HCT116 (cell line): ENCODE measurements at regions of chr17 and their contacts with region 1.

Region 1: GRCh38 chr17:1055751-1056645 is 59.1 kb downstream of the TIMM22 start:
- DNase-seq: no peak
- ATAC-seq: peak; percentile 68
- H3K4me3 ChIP-seq: no peak overlapping the region
- H3K27ac ChIP-seq: no peak overlapping the region
- H3K4me1 ChIP-seq: peaks cover 7 to 14% of the 10 kb centered on the region in 2 experiments
- H3K27me3 ChIP-seq: no peaks in the 10 kb centered on the region
- CTCF ChIP-seq: peak; percentile 34 to 73 (median 57); a peak in 5 of 6 replicates
- POLR2A ChIP-seq: no peak
- RAD21 ChIP-seq: peak; percentile 70

Region 2: GRCh38 chr17:951325-952132 is 104.5 kb before region 1 on chr17:
- CTCF ChIA-PET with region 1: no interaction called
- POLR2A ChIA-PET with region 1: no interaction called
- RAD21 ChIA-PET with region 1: no interaction called
- intact Hi-C with region 1: no loop called
- DNase-seq: no peak
- ATAC-seq: peak; percentile 66
- H3K4me3 ChIP-seq: no peak overlapping the region
- H3K27ac ChIP-seq: no peak overlapping the region
- H3K4me1 ChIP-seq: peaks cover 25 to 40% of the 10 kb centered on the region in 2 experiments
- H3K27me3 ChIP-seq: no peaks in the 10 kb centered on the region
- CTCF ChIP-seq: no peak
- POLR2A ChIP-seq: no peak
- RAD21 ChIP-seq: no peak

Region 3: DNA sequence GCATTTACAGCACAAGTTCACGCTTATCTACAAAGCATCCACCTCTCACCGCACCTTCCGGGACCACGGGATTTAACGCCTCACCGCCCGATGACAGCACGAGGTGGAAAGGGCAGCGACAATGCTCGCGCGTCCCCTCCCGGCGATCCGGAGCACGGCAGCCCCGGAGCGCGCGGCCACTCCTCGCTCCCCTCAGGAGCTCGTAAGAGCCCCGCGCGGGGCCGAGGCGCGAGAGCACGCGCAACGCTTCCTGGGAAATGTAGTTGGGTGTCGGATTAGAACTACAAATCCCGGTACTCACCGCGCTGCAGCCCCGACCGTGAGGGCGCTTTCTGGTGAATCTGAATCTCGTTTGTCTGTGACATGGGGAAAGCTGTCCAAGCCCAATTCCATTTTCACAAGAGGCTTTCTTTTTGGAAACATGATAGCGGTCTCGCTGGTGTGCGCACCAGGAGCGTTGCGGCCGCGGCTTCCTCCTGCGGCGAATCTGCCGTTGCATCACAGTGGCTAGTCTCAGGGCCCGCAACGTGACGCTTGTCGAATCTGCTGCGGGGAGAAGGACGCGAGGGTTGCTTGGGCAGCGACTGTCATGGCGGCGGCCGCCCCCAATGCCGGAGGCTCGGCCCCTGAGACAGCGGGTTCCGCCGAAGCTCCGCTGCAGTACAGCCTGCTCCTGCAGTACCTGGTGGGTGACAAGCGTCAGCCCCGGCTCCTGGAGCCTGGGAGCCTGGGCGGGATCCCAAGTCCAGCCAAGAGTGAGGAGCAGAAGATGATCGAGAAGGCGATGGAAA is 59.2 kb before region 1 on chr17 and contains the start of gene TIMM22:
- CTCF ChIA-PET with region 1: interaction called, 14 read pairs
- POLR2A ChIA-PET with region 1: no interaction called
- RAD21 ChIA-PET with region 1: no interaction called
- intact Hi-C with region 1: no loop called
- DNase-seq: peak; percentile 96
- ATAC-seq: peak; percentile 95
- H3K4me3 ChIP-seq: peak within 1 kb of the TSS; percentile 99 to 100
- H3K27ac ChIP-seq: peak within 1 kb of the TSS; percentile 58
- H3K4me1 ChIP-seq: peaks cover 8 to 19% of the 10 kb centered on the region in 2 experiments; a peak in 3 of 4 replicates
- H3K27me3 ChIP-seq: no peaks in the 10 kb centered on the region
- CTCF ChIP-seq: peak; percentile 88 to 93 (median 91); a peak in 5 of 6 replicates
- POLR2A ChIP-seq: peak; percentile 80
- RAD21 ChIP-seq: peak; percentile 98
- total RNA-seq, gene TIMM22: 14.0 TPM

Region 4: DNA sequence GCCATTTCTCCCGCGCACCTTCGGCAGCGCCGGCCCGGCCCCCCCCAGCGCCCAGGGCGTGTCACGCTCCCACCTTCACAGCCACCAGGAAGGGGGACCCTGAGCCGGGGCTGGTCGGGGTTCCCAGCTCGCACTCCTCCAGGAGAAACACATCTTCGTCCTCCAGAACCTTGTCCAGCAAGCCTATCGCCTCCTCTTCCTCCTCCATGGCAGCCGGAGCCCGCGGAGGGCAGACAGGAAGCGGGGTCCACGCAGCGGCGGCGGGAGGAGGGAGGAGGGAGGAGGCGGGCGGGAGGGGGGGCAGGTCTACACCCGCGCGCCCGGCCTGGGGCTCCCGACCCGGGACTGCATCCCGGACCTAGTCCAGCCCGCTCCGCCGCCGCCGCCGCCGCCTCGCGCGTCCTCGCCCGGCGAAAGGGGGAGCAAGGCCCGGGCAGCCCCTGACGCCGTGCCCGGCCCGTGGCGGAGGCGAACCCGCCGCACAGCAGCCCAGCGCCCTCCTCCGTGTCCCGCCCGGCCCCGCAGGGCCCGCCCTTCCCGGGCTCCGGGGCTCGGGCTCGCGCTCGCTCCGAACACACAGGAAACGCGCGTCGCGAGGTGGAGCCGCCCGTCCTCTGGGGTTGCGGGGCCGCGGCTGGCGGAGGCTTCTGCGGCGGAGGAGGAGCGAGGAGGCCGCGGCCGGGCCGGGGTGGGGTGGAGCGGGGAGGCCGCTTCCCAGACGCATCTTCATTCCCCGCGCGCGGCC is 53.0 kb after region 1 on chr17:
- CTCF ChIA-PET with region 1: interaction called, 25 read pairs
- POLR2A ChIA-PET with region 1: no interaction called
- RAD21 ChIA-PET with region 1: interaction called, 3 to 4 read pairs
- intact Hi-C with region 1: no loop called
- DNase-seq: no peak
- ATAC-seq: peak; percentile 39
- H3K4me3 ChIP-seq: peak overlapping the region; percentile 67 to 79
- H3K27ac ChIP-seq: peak overlapping the region; percentile 96
- H3K4me1 ChIP-seq: peaks cover 50 to 59% of the 10 kb centered on the region in 2 experiments
- H3K27me3 ChIP-seq: no peaks in the 10 kb centered on the region
- CTCF ChIP-seq: no peak
- POLR2A ChIP-seq: no peak
- RAD21 ChIP-seq: no peak

Region 5: GRCh38 chr17:1137465-1137894 is 81.5 kb after region 1 on chr17:
- CTCF ChIA-PET with region 1: interaction called, 24 read pairs
- POLR2A ChIA-PET with region 1: interaction called, 4 read pairs
- RAD21 ChIA-PET with region 1: interaction called in 1 of 2 experiments, 13 read pairs
- intact Hi-C with region 1: no loop called
- DNase-seq: peak; percentile 92
- ATAC-seq: peak; percentile 80
- H3K4me3 ChIP-seq: peak overlapping the region; percentile 65 to 69
- H3K27ac ChIP-seq: peak overlapping the region; percentile 77
- H3K4me1 ChIP-seq: peaks cover 5 to 17% of the 10 kb centered on the region in 2 experiments; a peak in 3 of 4 replicates
- H3K27me3 ChIP-seq: no peaks in the 10 kb centered on the region
- CTCF ChIP-seq: no peak
- POLR2A ChIP-seq: peak; percentile 84
- RAD21 ChIP-seq: no peak

Region 6: GRCh38 chr17:1186923-1187771 is 131.1 kb after region 1 on chr17:
- CTCF ChIA-PET with region 1: interaction called, 64 read pairs
- POLR2A ChIA-PET with region 1: no interaction called
- RAD21 ChIA-PET with region 1: interaction called, 10 to 13 read pairs
- intact Hi-C with region 1: loop called (anchors 1 kb)
- DNase-seq: peak; percentile 72
- ATAC-seq: peak; percentile 96
- H3K4me3 ChIP-seq: 0 out of 4 replicates have a peak overlapping the region, but pooled peaks of 1 of the 2 experiments have one; percentile 5
- H3K27ac ChIP-seq: no peak overlapping the region
- H3K4me1 ChIP-seq: peaks cover 7 to 36% of the 10 kb centered on the region in 2 experiments; a peak in 3 of 4 replicates
- H3K27me3 ChIP-seq: peaks cover 5% of the 10 kb centered on the region; the same call in 1 of the 2 replicates
- CTCF ChIP-seq: peak; percentile 90 to 99 (median 97)
- POLR2A ChIP-seq: no peak
- RAD21 ChIP-seq: peak; percentile 85

Region 7: DNA sequence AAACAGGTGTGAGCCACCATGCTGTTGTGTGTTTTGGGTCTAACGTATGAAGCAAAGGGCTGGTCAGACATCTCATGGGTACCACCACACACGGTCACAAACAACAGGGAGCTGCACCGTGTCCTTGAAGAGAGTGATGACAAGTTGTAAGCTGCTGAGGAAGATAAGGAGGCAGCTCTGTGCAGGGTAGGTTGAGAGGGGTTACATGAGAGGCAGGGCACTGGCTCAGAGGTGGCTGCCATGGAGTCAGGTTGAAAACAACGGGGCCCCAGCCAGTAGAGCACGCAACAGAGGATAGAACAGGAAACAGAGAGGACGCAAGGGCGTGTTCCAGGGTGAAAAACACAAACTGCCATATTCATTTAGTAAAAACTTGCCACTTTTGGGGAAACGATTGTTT is 275.7 kb after region 1 on chr17:
- CTCF ChIA-PET with region 1: interaction called, 11 read pairs
- POLR2A ChIA-PET with region 1: no interaction called
- RAD21 ChIA-PET with region 1: interaction called in 1 of 2 experiments, 4 read pairs
- intact Hi-C with region 1: loop called (anchors 5 kb)
- DNase-seq: no peak
- ATAC-seq: no peak
- H3K4me3 ChIP-seq: no peak overlapping the region
- H3K27ac ChIP-seq: no peak overlapping the region
- H3K4me1 ChIP-seq: no peaks in the 10 kb centered on the region
- H3K27me3 ChIP-seq: no peaks in the 10 kb centered on the region
- CTCF ChIP-seq: no peak
- POLR2A ChIP-seq: no peak
- RAD21 ChIP-seq: no peak